Natural killer cell (primary cell): ENCODE measurements at regions of chr14 and their contacts with region 1.

Region 1: DNA sequence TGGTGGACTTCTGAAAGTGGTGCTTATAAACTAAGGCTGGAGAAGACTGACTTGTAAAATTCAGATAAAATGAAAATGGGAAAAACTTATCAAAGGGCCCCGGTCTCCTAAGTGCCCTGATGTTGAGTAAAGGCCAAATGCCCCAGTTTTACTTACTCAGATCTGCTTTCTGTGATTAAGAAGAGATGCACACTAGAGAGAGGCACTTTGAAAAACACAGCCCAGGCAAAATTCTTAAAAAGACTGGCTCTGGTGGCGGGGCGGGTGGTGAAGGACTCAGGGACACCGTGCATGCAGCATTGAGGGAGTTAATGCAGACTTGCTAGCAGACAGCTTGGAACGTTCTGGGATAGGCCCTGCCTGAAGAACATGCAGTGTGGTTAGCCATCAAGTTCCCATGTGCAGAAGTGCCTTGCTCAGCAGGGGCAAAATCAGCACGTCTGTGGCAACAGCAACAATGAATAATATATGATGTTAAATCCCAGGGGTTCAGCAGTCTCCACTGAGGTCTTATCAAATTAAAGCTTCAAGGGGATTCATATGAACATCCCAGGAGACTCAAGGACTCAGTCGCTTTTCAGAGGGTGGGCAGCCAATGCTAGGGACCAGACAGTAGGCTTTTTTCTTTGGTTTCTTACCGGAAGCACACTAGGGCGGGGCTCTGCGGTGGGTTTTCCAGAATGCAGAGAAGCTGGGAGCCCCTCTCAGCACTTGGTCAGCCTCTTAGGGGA is 105.0 kb downstream of the DAD1 start:
- DNase-seq: peak in 1 of 2 donors; percentile 31
- ATAC-seq: peak; percentile 33 to 48 (median 35)
- H3K4me3 ChIP-seq: peak overlapping the region; percentile 17
- H3K4me3 Mint-ChIP-seq: peak overlapping the region; percentile 82
- H3K27ac ChIP-seq: peak overlapping the region; percentile 74
- H3K27ac Mint-ChIP-seq: peak overlapping the region; percentile 80 to 89
- H3K4me1 ChIP-seq: peaks cover 77% of the 10 kb centered on the region
- H3K4me1 Mint-ChIP-seq: peaks cover 97 to 98% of the 10 kb centered on the region in 2 donors
- H3K27me3 ChIP-seq: no peaks in the 10 kb centered on the region
- H3K27me3 Mint-ChIP-seq: no peaks in the 10 kb centered on the region
- CTCF ChIP-seq: no peak

Region 2: DNA sequence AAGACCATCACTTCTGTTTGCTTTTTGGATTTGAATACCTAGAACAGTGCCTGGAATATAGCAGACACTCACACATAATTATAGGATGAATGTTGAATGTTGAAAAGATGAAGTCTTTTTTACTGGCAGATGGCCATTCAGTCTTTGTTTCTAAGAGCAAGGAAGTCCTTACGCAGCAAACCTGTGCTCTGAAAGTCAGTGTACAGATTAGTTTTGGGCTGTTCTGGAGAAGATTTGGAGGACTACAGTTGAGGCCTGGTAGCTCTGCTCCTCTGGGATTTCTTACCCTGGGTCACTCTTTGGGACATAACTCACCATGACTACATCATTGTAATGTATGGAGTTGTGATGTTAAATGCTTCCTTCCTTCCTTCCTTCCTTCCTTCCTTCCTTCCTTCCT is 827.0 kb before region 1 on chr14:
- intact Hi-C with region 1: no loop called
- DNase-seq: no peak
- ATAC-seq: no peak
- H3K4me3 ChIP-seq: no peak overlapping the region
- H3K4me3 Mint-ChIP-seq: no peak overlapping the region
- H3K27ac ChIP-seq: no peak overlapping the region
- H3K27ac Mint-ChIP-seq: no peak overlapping the region
- H3K4me1 ChIP-seq: no peaks in the 10 kb centered on the region
- H3K4me1 Mint-ChIP-seq: no peaks in the 10 kb centered on the region
- H3K27me3 ChIP-seq: peaks cover 2% of the 10 kb centered on the region
- H3K27me3 Mint-ChIP-seq: peaks cover 11 to 23% of the 10 kb centered on the region in 2 donors
- CTCF ChIP-seq: no peak

Region 3: GRCh38 chr14:22448905-22449599 is 35.0 kb before region 1 on chr14:
- intact Hi-C with region 1: loop called (anchors 5 kb)
- DNase-seq: peak in 1 of 2 donors; percentile 42
- ATAC-seq: peak; percentile 58 to 73 (median 70)
- H3K4me3 ChIP-seq: peak overlapping the region; percentile 62
- H3K4me3 Mint-ChIP-seq: peak overlapping the region; percentile 96
- H3K27ac ChIP-seq: peak overlapping the region; percentile 79
- H3K27ac Mint-ChIP-seq: peak overlapping the region; percentile 80 to 89
- H3K4me1 ChIP-seq: peaks cover 58% of the 10 kb centered on the region
- H3K4me1 Mint-ChIP-seq: peaks cover 85 to 91% of the 10 kb centered on the region in 2 donors
- H3K27me3 ChIP-seq: no peaks in the 10 kb centered on the region
- H3K27me3 Mint-ChIP-seq: no peaks in the 10 kb centered on the region
- CTCF ChIP-seq: no peak

Region 4: GRCh38 chr14:22460461-22461195 is 23.4 kb before region 1 on chr14:
- intact Hi-C with region 1: loop called (anchors 2 kb)
- DNase-seq: peak in 1 of 2 donors; percentile 44
- ATAC-seq: peak; percentile 82 to 94 (median 92)
- H3K4me3 ChIP-seq: peak overlapping the region; percentile 62
- H3K4me3 Mint-ChIP-seq: peak overlapping the region; percentile 96
- H3K27ac ChIP-seq: peak overlapping the region; percentile 79
- H3K27ac Mint-ChIP-seq: peak overlapping the region; percentile 80 to 89
- H3K4me1 ChIP-seq: peaks cover 67% of the 10 kb centered on the region
- H3K4me1 Mint-ChIP-seq: peaks cover 93 to 98% of the 10 kb centered on the region in 2 donors
- H3K27me3 ChIP-seq: no peaks in the 10 kb centered on the region
- H3K27me3 Mint-ChIP-seq: no peaks in the 10 kb centered on the region
- CTCF ChIP-seq: no peak

Region 5: DNA sequence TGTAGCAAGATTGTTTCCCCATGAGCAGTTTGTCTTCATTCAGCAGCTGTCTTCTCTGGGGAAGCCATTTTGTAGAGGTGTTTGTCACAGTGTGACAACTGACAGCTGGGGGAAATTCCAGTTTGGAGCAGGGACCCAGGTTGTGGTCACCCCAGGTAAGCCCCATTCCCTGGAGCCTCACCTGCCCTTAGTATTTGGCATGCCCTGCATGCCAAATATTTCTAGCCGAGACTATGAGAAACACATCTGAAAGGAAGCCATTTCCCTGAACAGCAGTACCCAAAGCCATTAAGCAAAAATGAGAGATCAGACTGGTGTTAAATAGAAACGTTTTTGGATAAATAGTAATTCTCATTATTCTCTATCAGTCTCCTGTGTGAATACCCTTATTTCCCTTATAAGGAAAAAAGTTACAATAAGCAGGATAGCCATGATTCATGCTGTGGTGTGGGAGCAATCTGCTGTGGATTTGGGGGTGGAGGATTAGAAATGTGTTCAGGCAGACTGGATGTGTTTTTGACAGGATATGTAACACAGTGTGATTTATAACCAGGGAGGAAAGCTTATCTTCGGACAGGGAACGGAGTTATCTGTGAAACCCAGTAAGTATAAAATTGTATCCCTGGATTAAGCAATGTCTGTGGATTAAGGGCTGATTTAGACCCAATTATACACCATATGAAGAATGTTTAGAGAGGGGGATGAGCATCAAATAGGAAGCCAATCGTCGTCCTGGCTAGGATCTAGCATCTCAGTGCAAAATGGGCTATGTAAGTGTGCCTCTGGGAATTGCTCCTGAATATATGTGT is 36.1 kb after region 1 on chr14:
- intact Hi-C with region 1: loop called (anchors 5 kb)
- DNase-seq: peak in 1 of 2 donors; percentile 58
- ATAC-seq: no peak
- H3K4me3 ChIP-seq: no peak overlapping the region
- H3K4me3 Mint-ChIP-seq: peak overlapping the region; percentile 14
- H3K27ac ChIP-seq: peak overlapping the region; percentile 22
- H3K27ac Mint-ChIP-seq: peak overlapping the region; percentile 93 to 94
- H3K4me1 ChIP-seq: peaks cover 57% of the 10 kb centered on the region
- H3K4me1 Mint-ChIP-seq: peaks cover 79 to 88% of the 10 kb centered on the region in 2 donors
- H3K27me3 ChIP-seq: no peaks in the 10 kb centered on the region
- H3K27me3 Mint-ChIP-seq: no peaks in the 10 kb centered on the region
- CTCF ChIP-seq: no peak